Ovary (tissue), 10 donors: ENCODE measurements at regions of chr5 and their contacts with region 1.

Region 1: DNA sequence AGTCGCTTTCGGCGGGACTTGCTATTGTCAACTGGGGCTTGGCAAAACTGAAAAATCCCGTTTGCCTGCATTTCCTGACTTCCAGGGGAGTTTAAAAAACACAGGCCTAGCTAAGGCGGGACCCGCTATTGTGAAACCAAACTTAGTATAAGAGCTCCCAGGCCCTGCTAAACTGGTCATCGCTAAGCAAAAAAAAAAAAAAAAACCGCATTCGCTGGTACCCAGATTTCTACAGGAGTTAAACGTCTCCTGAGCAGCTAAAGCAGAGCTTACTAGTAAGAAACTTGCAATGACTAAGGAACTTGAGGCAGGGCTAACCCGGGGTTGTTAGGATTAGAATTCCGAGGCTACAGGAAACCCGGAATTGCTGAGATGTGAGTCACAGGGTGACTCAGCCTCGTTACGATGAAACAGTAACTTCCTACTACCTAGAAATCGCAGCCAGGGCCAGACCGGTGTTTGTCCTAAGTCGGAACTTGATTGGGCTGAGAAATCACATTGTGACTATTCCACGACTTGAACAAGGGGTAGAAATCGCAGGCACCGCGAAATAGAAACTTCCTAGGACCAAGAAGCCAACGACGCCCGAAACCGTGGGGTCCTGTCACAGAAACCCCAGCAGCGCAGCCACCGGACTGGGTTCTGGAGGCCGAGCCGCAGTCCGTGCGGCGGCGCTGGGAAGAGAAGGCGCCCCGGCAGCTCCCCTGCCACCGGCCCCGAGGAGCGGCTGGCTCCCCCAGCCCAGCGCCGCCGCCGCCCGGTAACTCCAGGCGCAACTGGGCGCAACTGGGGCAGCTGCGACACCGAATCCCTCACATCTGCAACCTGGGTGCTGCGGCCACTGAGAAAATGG is 89.5 kb downstream of the ANXA2R start:
- DNase-seq: peak; percentile 36 to 75 (median 55)
- H3K4me3 ChIP-seq: peak overlapping the region; percentile 55
- H3K27ac ChIP-seq: peak overlapping the region; percentile 33 to 61
- H3K4me1 ChIP-seq: no peaks in the 10 kb centered on the region
- H3K27me3 ChIP-seq: no peaks in the 10 kb centered on the region
- CTCF ChIP-seq: no peak
- EP300 ChIP-seq: no peak
- POLR2A ChIP-seq: no peak

Region 2: DNA sequence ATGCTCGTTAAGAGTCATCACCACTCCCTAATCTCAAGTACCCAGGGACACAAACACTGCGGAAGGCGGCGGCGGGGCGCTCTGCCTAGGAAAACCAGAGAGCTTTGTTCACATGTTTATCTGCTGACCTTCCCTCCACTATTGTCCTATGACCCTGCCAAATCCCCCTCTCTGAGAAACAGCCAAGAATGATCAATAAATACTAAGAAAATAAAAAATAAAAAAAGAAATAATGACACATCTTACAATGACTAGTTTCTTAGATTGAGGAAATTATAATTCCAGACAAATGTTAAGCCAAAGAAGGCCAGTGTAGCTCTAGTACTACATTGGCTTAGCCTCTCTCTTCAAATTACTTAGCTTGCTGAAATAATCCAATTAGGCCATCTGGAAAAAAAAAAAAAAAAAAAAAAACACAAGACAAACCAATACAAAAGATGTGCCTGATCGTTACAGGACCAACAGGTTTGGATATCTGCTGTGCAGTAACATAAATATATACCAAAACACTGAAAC is 31.5 kb after region 1 on chr5:
- intact Hi-C with region 1: no loop called
- DNase-seq: no peak
- H3K4me3 ChIP-seq: no peak overlapping the region
- H3K27ac ChIP-seq: no peak overlapping the region
- H3K4me1 ChIP-seq: no peaks in the 10 kb centered on the region
- H3K27me3 ChIP-seq: no peaks in the 10 kb centered on the region
- CTCF ChIP-seq: no peak
- EP300 ChIP-seq: no peak
- POLR2A ChIP-seq: no peak

Region 3: GRCh38 chr5:42994246-42995151 is 43.8 kb after region 1 on chr5:
- intact Hi-C with region 1: loop called in 1 of 4 experiments (anchors 2 kb)
- DNase-seq: peak; percentile 80 to 88 (median 82)
- H3K4me3 ChIP-seq: peak overlapping the region; percentile 21
- H3K27ac ChIP-seq: peak overlapping the region in 1 of 2 donors; percentile 8
- H3K4me1 ChIP-seq: peaks cover 6% of the 10 kb centered on the region
- H3K27me3 ChIP-seq: no peaks in the 10 kb centered on the region
- CTCF ChIP-seq: peak; percentile 70 to 79 (median 76)
- EP300 ChIP-seq: no peak
- POLR2A ChIP-seq: no peak